MCF 10A (cell line): ENCODE measurements at regions of chr16 and their contacts with region 1.

Region 1: GRCh38 chr16:50747207-50747956 is 5.5 kb downstream of the CYLD start:
- DNase-seq: peak; percentile 45
- H3K4me3 Mint-ChIP-seq: no peak overlapping the region
- H3K27ac Mint-ChIP-seq: no peak overlapping the region
- H3K4me1 Mint-ChIP-seq: peaks cover 29% of the 10 kb centered on the region
- H3K27me3 Mint-ChIP-seq: no peaks in the 10 kb centered on the region
- CTCF ChIP-seq: peak; percentile 51

Region 2: DNA sequence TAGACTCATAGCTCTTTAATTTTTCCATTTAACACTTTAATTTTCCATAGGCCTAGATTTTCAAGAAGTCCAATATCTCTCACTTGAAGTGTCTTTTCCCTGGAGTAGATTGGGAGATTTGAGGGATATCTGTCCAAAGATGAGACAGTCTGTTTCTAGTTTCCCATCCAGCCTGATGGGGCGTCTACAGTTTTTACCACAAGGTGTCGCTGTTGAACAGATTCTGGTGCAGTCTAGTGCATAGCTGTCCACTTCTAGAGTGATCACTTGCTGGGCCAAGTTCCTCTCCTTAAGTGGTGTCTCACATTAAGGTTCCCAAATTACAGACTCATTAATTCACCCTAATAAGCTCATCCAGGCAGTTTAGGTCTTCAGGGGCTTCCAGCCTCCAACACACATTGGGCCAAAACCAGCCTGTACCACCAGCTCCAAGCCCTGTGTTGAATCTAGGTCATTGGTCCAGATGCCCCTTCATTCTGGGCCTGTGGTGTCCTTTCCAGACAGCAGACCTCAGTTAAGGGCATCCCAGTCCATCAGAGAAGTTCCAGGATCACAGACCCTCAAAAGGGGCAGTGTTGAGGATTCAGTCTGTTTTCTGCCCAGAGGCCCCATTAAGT is 75.6 kb before region 1 on chr16:
- CTCF ChIA-PET with region 1: interaction called, 251 read pairs
- POLR2A ChIA-PET with region 1: interaction called, 8 read pairs
- intact Hi-C with region 1: loop called (anchors 1 kb)
- DNase-seq: peak; percentile 62
- H3K4me3 Mint-ChIP-seq: no peak overlapping the region
- H3K27ac Mint-ChIP-seq: no peak overlapping the region
- H3K4me1 Mint-ChIP-seq: no peaks in the 10 kb centered on the region
- H3K27me3 Mint-ChIP-seq: no peaks in the 10 kb centered on the region
- CTCF ChIP-seq: peak; percentile 84

Region 3: GRCh38 chr16:50901062-50901461 is 153.7 kb after region 1 on chr16:
- CTCF ChIA-PET with region 1: no interaction called
- POLR2A ChIA-PET with region 1: no interaction called
- intact Hi-C with region 1: no loop called
- DNase-seq: no peak
- H3K4me3 Mint-ChIP-seq: no peak overlapping the region
- H3K27ac Mint-ChIP-seq: no peak overlapping the region
- H3K4me1 Mint-ChIP-seq: no peaks in the 10 kb centered on the region
- H3K27me3 Mint-ChIP-seq: peaks cover 10% of the 10 kb centered on the region
- CTCF ChIP-seq: no peak